Heart right ventricle (tissue), 16 donors: ENCODE measurements at regions of chr11 and their contacts with region 1.

Region 1: DNA sequence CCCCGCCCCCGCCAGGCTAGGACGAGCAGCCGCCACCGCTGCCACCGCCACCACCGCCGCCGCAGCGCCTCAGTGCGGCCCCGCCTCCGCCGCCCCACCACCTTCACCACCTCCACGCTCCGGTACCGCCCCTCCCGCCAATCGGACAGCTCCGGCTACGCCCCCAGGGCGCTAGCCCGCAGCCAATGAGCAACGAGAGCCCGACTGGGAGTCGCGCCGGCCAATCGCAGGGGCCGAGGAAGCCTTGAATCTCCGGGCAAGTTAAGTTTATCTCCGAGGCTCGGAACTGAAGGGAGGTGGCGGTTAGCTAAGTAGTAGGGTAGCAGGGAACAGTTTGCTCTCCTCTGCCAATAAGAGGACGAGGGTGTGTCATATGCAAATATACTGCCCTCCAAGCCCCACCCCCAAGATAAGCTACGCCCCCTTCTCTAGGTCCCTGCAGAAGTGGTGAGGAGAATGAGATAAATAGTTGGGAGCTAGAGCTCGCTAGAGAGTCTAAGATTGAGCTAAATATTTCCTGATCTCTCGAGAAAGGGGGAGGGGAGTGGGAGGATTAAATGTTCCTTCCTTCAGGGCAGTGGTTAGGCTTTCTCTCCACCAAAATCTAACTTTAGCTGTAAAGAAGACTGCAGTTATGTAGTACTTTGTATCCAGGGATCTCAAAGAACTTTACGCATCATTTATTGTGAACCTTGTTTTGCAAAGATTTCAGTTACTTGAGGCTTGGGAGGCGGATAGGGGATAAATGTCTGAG is at the start of gene SESN3:
- DNase-seq: peak; percentile 98 to 99
- ATAC-seq: peak; percentile 94 to 99 (median 98)
- H3K4me3 ChIP-seq: peak within 1 kb of the TSS; percentile 63 to 94 (median 84)
- H3K27ac ChIP-seq: peak within 1 kb of the TSS; percentile 70 to 90 (median 88)
- H3K4me1 ChIP-seq: peaks cover 0 to 37% (median 21%) of the 10 kb centered on the region in 9 donors
- H3K27me3 ChIP-seq: no peaks in the 10 kb centered on the region
- CTCF ChIP-seq: peak in 3 of 9 donors; percentile 38 to 45 (median 39)
- total RNA-seq, gene SESN3: 2.6 to 15.4 (median 10.2) TPM

Region 2: DNA sequence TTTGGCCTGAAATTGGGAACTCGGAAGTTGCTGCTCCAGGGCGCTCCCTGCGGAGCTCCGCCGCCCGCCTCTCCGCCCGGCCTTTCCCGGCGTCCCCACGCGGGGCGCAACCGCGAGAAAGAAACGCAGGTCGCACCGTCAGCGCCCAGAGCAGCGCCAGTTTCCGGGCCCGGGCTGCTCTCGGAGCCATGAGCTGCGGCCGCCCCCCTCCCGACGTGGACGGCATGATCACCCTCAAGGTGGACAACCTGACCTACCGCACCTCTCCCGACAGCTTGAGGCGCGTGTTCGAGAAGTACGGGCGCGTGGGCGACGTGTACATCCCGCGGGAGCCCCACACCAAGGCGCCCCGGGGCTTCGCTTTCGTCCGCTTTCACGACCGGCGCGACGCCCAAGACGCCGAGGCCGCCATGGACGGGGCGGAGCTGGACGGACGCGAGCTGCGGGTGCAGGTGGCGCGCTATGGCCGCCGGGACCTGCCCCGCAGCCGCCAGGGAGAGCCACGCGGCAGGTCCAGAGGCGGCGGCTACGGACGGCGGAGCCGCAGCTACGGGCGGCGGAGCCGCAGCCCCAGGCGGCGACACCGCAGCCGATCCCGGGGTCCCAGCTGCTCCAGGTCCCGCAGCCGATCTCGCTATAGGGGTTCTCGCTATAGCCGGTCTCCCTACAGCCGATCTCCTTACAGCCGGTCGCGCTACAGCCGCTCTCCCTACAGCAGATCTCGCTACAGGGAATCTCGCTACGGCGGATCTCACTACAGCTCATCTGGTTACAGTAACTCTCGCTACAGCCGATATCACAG is 164.1 kb before region 1 on chr11:
- intact Hi-C with region 1: loop called in 1 of 10 experiments (anchors 5 kb)
- DNase-seq: peak; percentile 83 to 88
- ATAC-seq: peak; percentile 87 to 95 (median 90)
- H3K4me3 ChIP-seq: peak overlapping the region; percentile 72 to 89 (median 82)
- H3K27ac ChIP-seq: peak overlapping the region; percentile 94 to 99 (median 97)
- H3K4me1 ChIP-seq: peaks cover 0 to 27% (median 20%) of the 10 kb centered on the region in 9 donors
- H3K27me3 ChIP-seq: no peaks in the 10 kb centered on the region
- CTCF ChIP-seq: peak; percentile 50 to 77 (median 61)

Region 3: GRCh38 chr11:95163106-95163505 is 68.2 kb before region 1 on chr11:
- intact Hi-C with region 1: loop called in 1 of 10 experiments (anchors 10 kb)
- DNase-seq: no peak
- ATAC-seq: no peak
- H3K4me3 ChIP-seq: no peak overlapping the region
- H3K27ac ChIP-seq: no peak overlapping the region
- H3K4me1 ChIP-seq: no peaks in the 10 kb centered on the region
- H3K27me3 ChIP-seq: no peaks in the 10 kb centered on the region
- CTCF ChIP-seq: no peak

Region 4: DNA sequence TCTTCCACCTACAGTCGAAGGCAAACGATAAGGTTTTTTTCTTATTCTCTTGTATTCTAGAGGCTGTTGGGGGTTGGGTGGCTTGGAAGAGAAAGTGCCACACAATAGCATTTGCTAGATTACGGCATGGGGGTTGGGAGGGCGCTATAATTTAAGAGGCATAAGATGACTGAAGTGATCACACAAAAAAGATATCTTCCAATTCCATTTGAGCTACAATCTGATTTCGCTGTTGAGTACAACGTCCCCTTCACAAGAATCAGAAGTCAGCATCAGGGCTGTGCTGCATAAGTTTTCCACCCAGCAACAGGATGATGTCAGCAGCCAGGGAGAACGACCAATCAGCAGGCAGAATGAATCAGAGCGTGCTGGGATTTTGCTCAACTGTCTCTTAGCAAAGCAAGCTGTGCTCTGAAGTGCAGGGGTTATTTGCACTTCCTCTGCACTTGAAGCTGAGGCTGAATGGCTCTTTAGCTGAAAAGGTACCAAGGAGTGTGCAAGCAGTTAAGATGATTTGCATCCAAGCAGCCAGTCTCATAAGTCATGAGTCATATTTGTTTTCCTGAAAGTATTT is 22.9 kb after region 1 on chr11:
- intact Hi-C with region 1: loop called in 2 of 10 experiments (anchors 1 to 2 kb)
- DNase-seq: peak; percentile 42 to 85
- ATAC-seq: peak; percentile 88 to 99 (median 98)
- H3K4me3 ChIP-seq: peak overlapping the region in 9 of 10 donors; percentile 8 to 51 (median 45)
- H3K27ac ChIP-seq: peak overlapping the region in 7 of 10 donors; percentile 52 to 81 (median 64)
- H3K4me1 ChIP-seq: peaks cover 0 to 38% (median 17%) of the 10 kb centered on the region in 9 donors
- H3K27me3 ChIP-seq: no peaks in the 10 kb centered on the region
- CTCF ChIP-seq: no peak

Region 5: GRCh38 chr11:95337175-95337957 is 106.1 kb after region 1 on chr11:
- intact Hi-C with region 1: loop called in 4 of 10 experiments (anchors 5 to 10 kb)
- DNase-seq: peak; percentile 68 to 81
- ATAC-seq: peak; percentile 62 to 89 (median 80)
- H3K4me3 ChIP-seq: peak overlapping the region in 1 of 10 donors; percentile 19
- H3K27ac ChIP-seq: peak overlapping the region; percentile 64 to 91 (median 82)
- H3K4me1 ChIP-seq: peaks cover 17 to 44% (median 33%) of the 10 kb centered on the region in 9 donors
- H3K27me3 ChIP-seq: no peaks in the 10 kb centered on the region
- CTCF ChIP-seq: no peak

Region 6: GRCh38 chr11:95398437-95399112 is 167.3 kb after region 1 on chr11:
- intact Hi-C with region 1: no loop called
- DNase-seq: no peak
- ATAC-seq: no peak
- H3K4me3 ChIP-seq: no peak overlapping the region
- H3K27ac ChIP-seq: no peak overlapping the region
- H3K4me1 ChIP-seq: no peaks in the 10 kb centered on the region
- H3K27me3 ChIP-seq: no peaks in the 10 kb centered on the region
- CTCF ChIP-seq: no peak

Region 7: DNA sequence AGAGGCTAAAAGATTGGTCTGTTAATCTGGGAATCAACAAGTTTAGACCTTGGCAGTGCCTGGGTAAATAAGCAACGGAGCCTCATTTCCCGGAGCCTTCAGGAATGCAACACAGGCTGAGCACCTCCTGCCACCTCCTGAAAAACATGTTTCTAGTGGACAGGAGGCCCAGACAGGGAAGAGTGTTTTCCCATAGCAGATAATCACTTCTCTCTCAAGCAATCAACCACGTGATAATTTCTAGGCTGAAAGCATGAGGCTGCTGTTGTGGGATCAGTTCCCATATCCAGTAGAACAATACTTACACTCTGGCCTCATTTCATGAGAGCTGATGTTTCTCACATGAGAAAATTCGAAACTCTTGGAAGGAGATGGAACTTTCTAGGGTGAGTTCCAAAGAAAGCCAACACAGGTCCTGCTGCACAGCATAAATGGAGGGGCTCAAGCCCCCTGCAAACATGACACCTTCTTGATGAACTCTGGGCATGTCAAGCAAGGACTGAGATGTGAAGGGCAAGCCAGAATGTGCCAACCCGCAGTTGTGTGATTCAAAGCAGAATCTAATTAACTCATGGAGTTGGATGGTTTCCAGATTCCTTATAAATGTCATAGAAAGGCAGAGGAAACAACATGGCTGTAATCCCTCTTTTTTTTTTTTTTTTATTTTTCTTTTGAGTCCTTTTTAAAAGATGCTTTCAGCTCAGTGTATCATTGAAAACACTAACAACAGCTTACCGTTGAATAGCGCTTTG is 228.2 kb after region 1 on chr11:
- intact Hi-C with region 1: no loop called
- DNase-seq: no peak
- ATAC-seq: peak in 7 of 8 donors; percentile 48 to 82 (median 72)
- H3K4me3 ChIP-seq: no peak overlapping the region
- H3K27ac ChIP-seq: peak overlapping the region in 5 of 10 donors; percentile 12 to 49 (median 41)
- H3K4me1 ChIP-seq: peaks cover 0 to 16% (median 9%) of the 10 kb centered on the region in 9 donors
- H3K27me3 ChIP-seq: no peaks in the 10 kb centered on the region
- CTCF ChIP-seq: no peak